Activated CD8-positive, alpha-beta T cell treated with anti-CD3 and anti-CD28 coated beads for 36 hours (primary cell): ENCODE measurements at regions of chr18 and their contacts with region 1.

Region 1: GRCh38 chr18:58671111-58671631 is at the start of gene MALT1:
- DNase-seq: peak; percentile 94
- ATAC-seq: peak; percentile 92
- H3K4me3 Mint-ChIP-seq: peak within 1 kb of the TSS; percentile 93
- H3K27ac Mint-ChIP-seq: peak within 1 kb of the TSS; percentile 95
- H3K4me1 Mint-ChIP-seq: peaks cover 60% of the 10 kb centered on the region
- H3K27me3 Mint-ChIP-seq: no peaks in the 10 kb centered on the region
- CTCF ChIP-seq: no peak
- total RNA-seq, gene MALT1: 57.8 to 67.5 TPM

Region 2: GRCh38 chr18:58529714-58530354 is 141.3 kb before region 1 on chr18:
- CTCF ChIA-PET with region 1: interaction called, 32 read pairs
- POLR2A ChIA-PET with region 1: interaction called, 5 read pairs
- intact Hi-C with region 1: no loop called
- DNase-seq: peak; percentile 84
- ATAC-seq: peak; percentile 79
- H3K4me3 Mint-ChIP-seq: no peak overlapping the region
- H3K27ac Mint-ChIP-seq: no peak overlapping the region
- H3K4me1 Mint-ChIP-seq: peaks cover 16% of the 10 kb centered on the region
- H3K27me3 Mint-ChIP-seq: peaks cover 16% of the 10 kb centered on the region
- CTCF ChIP-seq: peak; percentile 95

Region 3: GRCh38 chr18:58615140-58616132 is 55.7 kb before region 1 on chr18:
- CTCF ChIA-PET with region 1: no interaction called
- POLR2A ChIA-PET with region 1: interaction called, 5 read pairs
- intact Hi-C with region 1: loop called (anchors 5 kb)
- DNase-seq: peak; percentile 89
- ATAC-seq: peak; percentile 97
- H3K4me3 Mint-ChIP-seq: peak overlapping the region; percentile 49
- H3K27ac Mint-ChIP-seq: peak overlapping the region; percentile 96
- H3K4me1 Mint-ChIP-seq: peaks cover 39% of the 10 kb centered on the region
- H3K27me3 Mint-ChIP-seq: no peaks in the 10 kb centered on the region
- CTCF ChIP-seq: no peak

Region 4: DNA sequence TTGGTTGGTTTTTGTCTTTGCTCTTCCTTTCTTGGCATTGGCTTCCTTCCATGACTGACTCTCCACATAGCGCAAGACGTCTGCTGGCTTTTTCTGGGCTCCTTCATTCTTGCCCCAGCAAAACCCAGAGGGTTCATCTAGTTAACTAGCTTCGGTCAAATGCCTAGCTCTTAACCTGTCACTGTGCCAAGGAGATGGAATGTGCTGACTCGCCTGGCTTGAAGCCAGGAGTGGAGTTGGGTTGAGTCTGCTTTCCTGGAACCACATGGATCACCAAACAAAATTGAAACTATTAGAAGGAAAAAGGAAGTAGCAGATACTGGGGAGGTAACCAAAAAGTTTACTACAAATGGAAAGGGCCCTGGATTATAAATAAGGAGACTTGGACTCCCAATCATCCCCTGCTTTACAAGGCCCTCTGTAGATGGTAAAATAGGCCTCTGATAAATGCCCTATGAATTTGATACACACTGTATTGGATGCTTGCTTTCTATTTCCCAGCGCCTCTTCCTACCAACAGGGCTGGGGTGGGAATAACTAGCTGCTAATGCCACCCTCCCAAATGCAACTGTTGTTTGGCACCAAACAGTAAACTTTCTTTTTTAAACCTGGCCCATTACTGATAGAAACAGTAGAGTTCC is 11.4 kb after region 1 on chr18:
- CTCF ChIA-PET with region 1: interaction called, 11 read pairs
- POLR2A ChIA-PET with region 1: interaction called, 33 read pairs
- intact Hi-C with region 1: no loop called
- DNase-seq: no peak
- ATAC-seq: no peak
- H3K4me3 Mint-ChIP-seq: no peak overlapping the region
- H3K27ac Mint-ChIP-seq: no peak overlapping the region
- H3K4me1 Mint-ChIP-seq: peaks cover 54% of the 10 kb centered on the region
- H3K27me3 Mint-ChIP-seq: no peaks in the 10 kb centered on the region
- CTCF ChIP-seq: no peak

Region 5: GRCh38 chr18:58687871-58688308 is 16.7 kb after region 1 on chr18:
- CTCF ChIA-PET with region 1: interaction called, 11 read pairs
- POLR2A ChIA-PET with region 1: interaction called, 34 read pairs
- intact Hi-C with region 1: no loop called
- DNase-seq: peak; percentile 75
- ATAC-seq: peak; percentile 91
- H3K4me3 Mint-ChIP-seq: peak overlapping the region; percentile 61
- H3K27ac Mint-ChIP-seq: peak overlapping the region; percentile 94
- H3K4me1 Mint-ChIP-seq: peaks cover 69% of the 10 kb centered on the region
- H3K27me3 Mint-ChIP-seq: no peaks in the 10 kb centered on the region
- CTCF ChIP-seq: no peak

Region 6: GRCh38 chr18:58699551-58699950 is 28.4 kb after region 1 on chr18:
- CTCF ChIA-PET with region 1: no interaction called
- POLR2A ChIA-PET with region 1: interaction called, 12 read pairs
- intact Hi-C with region 1: no loop called
- DNase-seq: no peak
- ATAC-seq: no peak
- H3K4me3 Mint-ChIP-seq: no peak overlapping the region
- H3K27ac Mint-ChIP-seq: no peak overlapping the region
- H3K4me1 Mint-ChIP-seq: peaks cover 49% of the 10 kb centered on the region
- H3K27me3 Mint-ChIP-seq: no peaks in the 10 kb centered on the region
- CTCF ChIP-seq: no peak

Region 7: DNA sequence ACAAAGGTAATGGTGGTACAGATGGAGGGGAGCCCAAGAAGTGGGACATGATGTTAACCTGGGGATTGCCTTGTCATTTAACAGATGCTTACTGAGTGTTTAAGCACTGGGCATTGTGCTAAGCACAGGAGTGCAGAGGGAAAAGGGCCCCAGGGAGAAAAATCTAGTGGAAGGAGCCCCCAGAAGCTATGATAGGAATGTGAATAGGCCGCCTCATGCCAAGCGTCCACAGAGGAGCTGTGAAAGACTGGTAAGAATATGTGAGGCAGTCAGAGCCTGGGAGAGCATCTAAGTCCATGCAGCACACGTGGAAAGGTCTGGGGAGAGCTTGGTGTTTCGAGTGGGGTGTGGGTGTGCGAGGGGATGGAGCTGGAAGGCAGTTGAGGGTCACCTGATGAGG is 199.0 kb after region 1 on chr18:
- CTCF ChIA-PET with region 1: no interaction called
- POLR2A ChIA-PET with region 1: no interaction called
- intact Hi-C with region 1: no loop called
- DNase-seq: no peak
- ATAC-seq: no peak
- H3K4me3 Mint-ChIP-seq: no peak overlapping the region
- H3K27ac Mint-ChIP-seq: no peak overlapping the region
- H3K4me1 Mint-ChIP-seq: no peaks in the 10 kb centered on the region
- H3K27me3 Mint-ChIP-seq: peaks cover 45% of the 10 kb centered on the region
- CTCF ChIP-seq: no peak

Region 8: DNA sequence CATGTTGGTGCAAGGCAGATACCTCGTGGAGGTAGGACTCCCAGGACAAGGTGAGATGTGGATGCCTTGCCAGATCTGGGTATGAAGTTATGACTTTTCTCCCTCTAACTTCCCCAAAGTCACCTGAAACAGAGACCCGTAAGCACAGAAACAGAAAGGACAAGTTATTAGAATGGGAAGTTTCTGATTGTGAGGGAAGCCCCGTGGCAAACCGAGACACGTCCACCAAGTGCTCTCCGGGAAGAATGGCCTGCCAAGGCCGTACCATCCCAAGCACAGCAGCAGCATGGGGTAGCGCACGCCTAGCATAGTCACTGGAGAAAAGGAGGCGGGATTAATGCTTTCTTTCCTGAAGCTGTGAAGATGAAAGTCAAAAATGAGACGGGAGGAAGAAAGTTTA is 304.1 kb after region 1 on chr18:
- CTCF ChIA-PET with region 1: no interaction called
- POLR2A ChIA-PET with region 1: no interaction called
- intact Hi-C with region 1: no loop called
- DNase-seq: no peak
- ATAC-seq: no peak
- H3K4me3 Mint-ChIP-seq: no peak overlapping the region
- H3K27ac Mint-ChIP-seq: no peak overlapping the region
- H3K4me1 Mint-ChIP-seq: no peaks in the 10 kb centered on the region
- H3K27me3 Mint-ChIP-seq: peaks cover 19% of the 10 kb centered on the region
- CTCF ChIP-seq: no peak